HCT116 (cell line): ENCODE measurements at regions of chr4 and their contacts with region 1.

Region 1: DNA sequence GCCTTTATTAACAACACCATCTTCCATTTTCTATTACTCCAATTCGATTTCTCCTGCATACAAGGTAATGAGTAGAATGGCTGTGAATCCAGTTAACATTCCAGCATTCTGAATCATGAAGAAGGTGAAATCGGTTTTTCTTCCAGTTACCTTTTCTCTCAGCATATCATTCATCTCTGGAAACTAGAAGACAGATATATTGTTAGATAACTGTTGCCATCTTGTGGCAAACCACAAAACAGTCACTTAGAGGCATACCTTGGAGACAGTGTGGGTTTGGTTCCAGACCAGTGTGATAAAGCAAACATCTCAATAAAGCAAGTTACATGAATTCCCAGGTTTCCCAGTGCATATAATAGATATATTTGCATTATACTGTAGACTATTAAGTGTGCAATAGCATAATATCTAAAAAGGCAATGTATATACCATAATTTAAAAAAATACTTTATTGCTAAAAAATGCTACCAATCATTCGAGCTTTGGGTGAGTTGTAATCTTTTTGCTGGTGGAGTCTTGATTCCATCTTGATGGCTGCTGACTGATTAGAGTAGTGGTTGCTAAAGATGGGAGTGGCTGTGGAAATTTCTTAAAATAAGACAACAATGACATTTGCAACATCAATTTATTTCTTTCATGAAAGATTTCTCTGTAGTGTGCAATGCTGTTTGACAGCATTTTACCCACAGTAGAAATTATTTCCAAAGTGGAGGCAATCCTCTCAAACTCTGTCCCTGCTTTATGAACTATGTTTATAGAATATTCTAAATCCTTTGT is 82.1 kb downstream of the SLC39A8 start:
- DNase-seq: peak; percentile 51
- ATAC-seq: peak; percentile 96
- H3K4me3 ChIP-seq: no peak overlapping the region
- H3K27ac ChIP-seq: no peak overlapping the region
- H3K4me1 ChIP-seq: peaks cover 4 to 5% of the 10 kb centered on the region in 2 experiments
- H3K27me3 ChIP-seq: no peaks in the 10 kb centered on the region
- CTCF ChIP-seq: peak; percentile 51 to 75 (median 52); a peak in 5 of 6 replicates
- POLR2A ChIP-seq: no peak
- RAD21 ChIP-seq: peak; percentile 90

Region 2: DNA sequence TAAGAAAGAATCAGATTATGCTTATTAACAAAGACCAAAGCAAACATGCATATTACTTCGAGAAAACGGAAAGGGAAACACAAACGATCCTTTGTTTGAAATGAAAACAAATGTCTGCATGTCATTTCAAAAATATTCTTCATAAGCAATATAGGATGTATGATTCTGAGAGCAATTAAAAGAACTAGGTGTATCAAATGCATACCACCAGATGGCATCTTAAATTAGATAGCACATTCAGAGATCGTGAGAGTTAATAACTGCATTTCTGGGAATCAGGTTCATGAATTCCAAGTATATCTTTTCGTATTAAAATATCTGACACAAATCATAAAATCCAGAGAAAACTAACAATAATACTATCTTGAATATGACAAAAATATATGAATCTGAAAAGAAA is 1075.4 kb before region 1 on chr4:
- CTCF ChIA-PET with region 1: no interaction called
- POLR2A ChIA-PET with region 1: no interaction called
- RAD21 ChIA-PET with region 1: no interaction called
- intact Hi-C with region 1: loop called (anchors 5 kb)
- DNase-seq: no peak
- ATAC-seq: no peak
- H3K4me3 ChIP-seq: no peak overlapping the region
- H3K27ac ChIP-seq: no peak overlapping the region; the same call in 1 of the 2 replicates
- H3K4me1 ChIP-seq: peaks cover 54 to 60% of the 10 kb centered on the region in 2 experiments
- H3K27me3 ChIP-seq: no peaks in the 10 kb centered on the region
- CTCF ChIP-seq: peak; percentile 20 to 43 (median 24); a peak in 3 of 6 replicates
- POLR2A ChIP-seq: no peak
- RAD21 ChIP-seq: peak; percentile 56

Region 3: DNA sequence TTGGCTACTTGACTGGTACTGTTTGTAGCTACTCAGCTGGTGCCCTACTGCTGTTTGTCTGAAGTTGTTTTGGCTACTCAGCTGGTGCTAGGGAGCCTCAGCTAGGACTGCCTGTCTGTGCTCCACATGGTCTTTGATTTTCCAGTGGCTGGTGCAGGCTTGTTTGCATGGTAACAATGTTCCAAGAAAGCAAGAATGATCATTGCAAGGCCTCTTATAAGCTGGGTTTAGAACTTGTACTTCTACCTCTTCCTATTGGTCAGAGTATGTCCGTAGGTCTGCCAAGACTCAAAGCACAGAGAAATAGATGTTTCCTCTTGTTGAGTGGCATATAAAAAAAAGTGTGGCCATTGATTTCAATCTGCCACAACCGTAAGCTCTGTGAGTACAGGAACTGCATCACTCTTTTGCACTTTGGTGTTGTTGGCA is 255.5 kb after region 1 on chr4:
- CTCF ChIA-PET with region 1: no interaction called
- POLR2A ChIA-PET with region 1: no interaction called
- RAD21 ChIA-PET with region 1: no interaction called
- intact Hi-C with region 1: no loop called
- DNase-seq: no peak
- ATAC-seq: no peak
- H3K4me3 ChIP-seq: no peak overlapping the region
- H3K27ac ChIP-seq: no peak overlapping the region
- H3K4me1 ChIP-seq: no peaks in the 10 kb centered on the region
- H3K27me3 ChIP-seq: no peaks in the 10 kb centered on the region
- CTCF ChIP-seq: no peak
- POLR2A ChIP-seq: no peak
- RAD21 ChIP-seq: no peak